H1 (cell line): ENCODE measurements at regions of chr13 and their contacts with region 1.

Region 1: DNA sequence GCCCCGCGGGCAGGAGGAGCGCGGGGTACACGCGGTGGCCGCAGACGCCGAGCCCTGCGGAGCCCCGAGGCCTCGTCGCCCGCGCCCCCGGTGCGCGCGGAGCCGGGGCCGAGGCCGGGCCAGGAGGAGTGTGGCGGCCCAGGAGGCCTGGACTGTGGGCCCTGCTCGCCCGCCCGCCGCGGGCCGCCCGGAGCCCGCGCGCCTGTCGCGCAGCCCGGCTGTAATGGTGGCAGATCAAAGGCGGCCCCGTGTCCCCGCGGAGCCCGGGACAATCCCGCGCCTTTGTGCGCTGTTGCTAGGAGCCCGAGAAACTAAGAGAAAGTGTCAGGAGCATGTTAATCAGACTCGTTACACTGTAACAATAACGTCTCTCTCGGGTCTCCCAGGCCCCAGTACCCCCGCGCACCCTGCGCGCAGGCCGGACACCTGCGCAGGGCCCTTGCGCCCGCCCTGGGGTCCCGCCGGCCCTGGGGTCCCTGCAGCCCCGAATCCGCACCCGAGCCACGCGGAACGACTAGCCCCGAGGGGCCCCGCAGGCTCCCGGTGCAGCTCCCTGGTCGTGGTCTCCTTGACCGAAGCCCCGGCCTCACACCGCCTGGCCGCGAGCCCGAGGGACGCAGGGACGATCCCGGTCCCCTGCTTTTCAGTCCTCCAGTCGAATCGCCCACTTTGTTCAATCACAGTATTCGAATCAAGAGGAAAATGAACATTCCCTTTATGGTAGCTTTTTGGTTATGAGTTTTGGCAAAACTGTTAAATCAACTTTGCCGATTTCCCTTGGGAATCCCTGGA is 75.4 kb downstream of the ZIC5 start:
- DNase-seq: peak in 1 of 2 experiments; percentile 65
- H3K4me3 ChIP-seq: peak overlapping the region; percentile 25 to 54 (median 34); a peak in 5 of 8 replicates
- H3K27ac ChIP-seq: no peak overlapping the region
- H3K4me1 ChIP-seq: peaks cover 9 to 29% (median 18%) of the 10 kb centered on the region in 4 experiments
- H3K27me3 ChIP-seq: peaks cover 0 to 24% (median 19%) of the 10 kb centered on the region in 4 experiments; a peak in 5 of 7 replicates
- CTCF ChIP-seq: no peak
- EP300 ChIP-seq: no peak
- POLR2A ChIP-seq: no peak
- RAD21 ChIP-seq: no peak

Region 2: DNA sequence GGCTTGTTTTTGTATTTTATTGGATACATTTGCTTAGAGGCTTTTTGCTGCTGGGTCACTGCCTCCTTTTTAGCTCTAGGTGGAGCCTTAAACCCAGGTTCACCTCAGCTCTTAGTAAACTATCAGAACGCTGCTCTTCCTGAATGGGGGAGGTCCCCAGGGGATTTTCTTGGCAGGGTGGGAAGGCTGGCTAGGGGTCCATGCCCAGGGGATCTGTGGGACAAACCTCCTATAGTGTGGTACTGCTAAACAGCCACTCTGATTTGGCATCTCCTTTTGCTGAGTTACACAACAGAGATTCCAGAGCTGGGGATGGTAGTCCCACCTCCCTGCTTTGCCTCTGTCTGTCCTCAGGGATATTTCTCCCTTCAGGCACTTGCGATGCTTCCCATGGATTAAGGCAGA is 129.5 kb before region 1 on chr13:
- CTCF ChIA-PET with region 1: interaction called, 10 read pairs
- POLR2A ChIA-PET with region 1: no interaction called
- DNase-seq: peak; percentile 33 to 63
- H3K4me3 ChIP-seq: no peak overlapping the region
- H3K27ac ChIP-seq: no peak overlapping the region; the same call in 1 of the 2 replicates
- H3K4me1 ChIP-seq: peaks cover 5 to 12% (median 7%) of the 10 kb centered on the region in 4 experiments; a peak in 5 of 7 replicates
- H3K27me3 ChIP-seq: no peaks in the 10 kb centered on the region
- CTCF ChIP-seq: peak in 2 of 3 experiments; percentile 64 to 78; a peak in 3 of 4 replicates
- EP300 ChIP-seq: no peak
- POLR2A ChIP-seq: no peak
- RAD21 ChIP-seq: peak; percentile 89 to 92

Region 3: GRCh38 chr13:99908140-99908803 is 12.1 kb after region 1 on chr13:
- CTCF ChIA-PET with region 1: interaction called, 80 read pairs
- POLR2A ChIA-PET with region 1: interaction called, 4 read pairs
- DNase-seq: no peak
- H3K4me3 ChIP-seq: no peak overlapping the region
- H3K27ac ChIP-seq: no peak overlapping the region
- H3K4me1 ChIP-seq: peaks cover 1 to 9% (median 3%) of the 10 kb centered on the region in 4 experiments; a peak in 4 of 7 replicates
- H3K27me3 ChIP-seq: no peaks in the 10 kb centered on the region; a peak in 1 of 7 replicates
- CTCF ChIP-seq: no peak
- EP300 ChIP-seq: no peak
- POLR2A ChIP-seq: no peak
- RAD21 ChIP-seq: no peak

Region 4: DNA sequence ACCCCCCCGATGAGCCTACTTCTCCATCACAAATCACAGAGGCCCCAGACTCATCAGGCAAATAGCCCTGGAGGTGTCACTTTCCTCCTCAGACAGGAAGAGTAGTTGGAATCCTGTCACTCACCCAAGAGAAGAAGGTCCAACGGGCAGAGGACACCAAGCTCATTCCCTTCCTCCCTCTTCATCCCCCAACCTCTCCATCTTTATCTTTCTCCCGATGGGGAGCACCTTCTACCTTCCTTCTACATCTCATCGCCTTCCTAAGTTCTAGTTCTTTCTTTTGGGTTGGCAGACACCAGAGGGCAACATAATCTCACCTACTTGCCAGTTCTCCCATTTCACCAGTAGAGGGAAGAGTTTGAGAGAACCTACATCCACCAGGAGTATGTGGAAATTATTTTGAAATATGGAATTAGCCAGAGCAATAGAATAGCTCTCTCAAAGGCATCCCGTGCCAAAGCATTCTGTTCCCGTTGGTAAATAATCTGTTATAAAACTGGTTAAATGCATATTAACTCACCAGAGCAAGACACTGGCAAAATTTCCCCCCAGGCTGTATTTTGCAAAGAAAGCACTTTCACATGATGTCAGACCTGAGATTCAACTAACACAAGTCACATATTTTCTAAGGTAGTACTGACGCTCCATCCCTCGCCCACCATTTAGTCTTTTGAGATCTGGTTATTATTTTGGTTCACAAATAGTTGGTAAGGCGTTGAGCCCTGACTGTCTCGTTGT is 20.3 kb after region 1 on chr13:
- CTCF ChIA-PET with region 1: interaction called, 80 read pairs
- POLR2A ChIA-PET with region 1: interaction called, 4 read pairs
- DNase-seq: no peak
- H3K4me3 ChIP-seq: no peak overlapping the region
- H3K27ac ChIP-seq: no peak overlapping the region
- H3K4me1 ChIP-seq: peaks cover 1 to 4% (median 2%) of the 10 kb centered on the region in 4 experiments; a peak in 5 of 7 replicates
- H3K27me3 ChIP-seq: no peaks in the 10 kb centered on the region
- CTCF ChIP-seq: peak in 2 of 3 experiments; percentile 96 to 100; a peak in 3 of 4 replicates
- EP300 ChIP-seq: no peak
- POLR2A ChIP-seq: no peak
- RAD21 ChIP-seq: peak; percentile 80 to 86

Region 5: GRCh38 chr13:99925999-99926731 is 30.0 kb after region 1 on chr13:
- CTCF ChIA-PET with region 1: interaction called, 18 read pairs
- POLR2A ChIA-PET with region 1: no interaction called
- DNase-seq: no peak
- H3K4me3 ChIP-seq: no peak overlapping the region
- H3K27ac ChIP-seq: no peak overlapping the region
- H3K4me1 ChIP-seq: peaks cover 0 to 4% (median under 1%) of the 10 kb centered on the region in 4 experiments; a peak in 2 of 7 replicates
- H3K27me3 ChIP-seq: no peaks in the 10 kb centered on the region
- CTCF ChIP-seq: no peak
- EP300 ChIP-seq: no peak
- POLR2A ChIP-seq: no peak
- RAD21 ChIP-seq: no peak

Region 6: GRCh38 chr13:99935777-99936176 is 39.6 kb after region 1 on chr13:
- CTCF ChIA-PET with region 1: interaction called, 11 read pairs
- POLR2A ChIA-PET with region 1: no interaction called
- DNase-seq: peak in 1 of 2 experiments; percentile 60
- H3K4me3 ChIP-seq: no peak overlapping the region
- H3K27ac ChIP-seq: no peak overlapping the region
- H3K4me1 ChIP-seq: peaks cover 0 to 4% (median 2%) of the 10 kb centered on the region in 4 experiments; a peak in 3 of 7 replicates
- H3K27me3 ChIP-seq: no peaks in the 10 kb centered on the region
- CTCF ChIP-seq: peak; percentile 34 to 71 (median 52); a peak in 3 of 4 replicates
- EP300 ChIP-seq: no peak
- POLR2A ChIP-seq: no peak
- RAD21 ChIP-seq: peak; percentile 21 to 49; a peak in 2 of 4 replicates

Region 7: GRCh38 chr13:99949679-99950413 is 53.7 kb after region 1 on chr13:
- CTCF ChIA-PET with region 1: interaction called, 15 read pairs
- POLR2A ChIA-PET with region 1: no interaction called
- DNase-seq: no peak
- H3K4me3 ChIP-seq: no peak overlapping the region
- H3K27ac ChIP-seq: no peak overlapping the region
- H3K4me1 ChIP-seq: peaks cover 1 to 5% (median 2%) of the 10 kb centered on the region in 4 experiments; a peak in 4 of 7 replicates
- H3K27me3 ChIP-seq: peaks cover 0 to 7% (median 3%) of the 10 kb centered on the region in 4 experiments; a peak in 5 of 7 replicates
- CTCF ChIP-seq: no peak
- EP300 ChIP-seq: no peak
- POLR2A ChIP-seq: no peak
- RAD21 ChIP-seq: no peak